ENCODE measurements at regions of chr10 and their contacts with region 1.

Region 1: DNA sequence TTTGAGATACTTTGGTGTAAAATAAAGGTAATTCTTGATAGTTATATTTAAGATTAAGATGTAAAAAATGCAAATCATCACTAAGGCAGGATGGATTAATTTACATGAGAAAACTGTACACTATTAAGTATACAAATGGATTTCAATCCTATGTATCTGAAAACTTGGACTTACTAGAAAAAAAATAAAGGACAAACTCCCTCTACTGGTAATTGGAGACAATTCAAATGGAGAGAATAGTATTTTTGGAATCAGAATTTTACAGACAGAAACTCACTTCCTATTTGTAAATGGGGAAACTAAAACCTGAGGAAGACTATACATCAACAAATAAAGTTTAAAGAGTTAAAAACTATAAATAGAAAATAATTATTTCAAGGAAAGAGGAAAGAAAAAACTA is 62.6 kb downstream of the CUL2 start:
- DNase-seq: no peak
- ATAC-seq: no peak
- H3K4me3 ChIP-seq: no peak overlapping the region
- H3K4me3 Mint-ChIP-seq: no peak overlapping the region
- H3K27ac ChIP-seq: no peak overlapping the region
- H3K27ac Mint-ChIP-seq: no peak overlapping the region
- H3K4me1 ChIP-seq: no peaks in the 10 kb centered on the region
- H3K4me1 Mint-ChIP-seq: no peaks in the 10 kb centered on the region
- H3K27me3 ChIP-seq: no peaks in the 10 kb centered on the region
- H3K27me3 Mint-ChIP-seq: no peaks in the 10 kb centered on the region
- CTCF ChIP-seq: peak; percentile 44

Region 2: GRCh38 chr10:34454590-34455261 is 572.8 kb before region 1 on chr10:
- CTCF ChIA-PET with region 1: no interaction called
- POLR2A ChIA-PET with region 1: no interaction called
- intact Hi-C with region 1: no loop called
- DNase-seq: no peak
- ATAC-seq: no peak
- H3K4me3 ChIP-seq: no peak overlapping the region
- H3K4me3 Mint-ChIP-seq: no peak overlapping the region
- H3K27ac ChIP-seq: no peak overlapping the region
- H3K27ac Mint-ChIP-seq: no peak overlapping the region
- H3K4me1 ChIP-seq: no peaks in the 10 kb centered on the region
- H3K4me1 Mint-ChIP-seq: no peaks in the 10 kb centered on the region
- H3K27me3 ChIP-seq: no peaks in the 10 kb centered on the region
- H3K27me3 Mint-ChIP-seq: no peaks in the 10 kb centered on the region
- CTCF ChIP-seq: no peak

Region 3: GRCh38 chr10:34565934-34566333 is 461.6 kb before region 1 on chr10:
- CTCF ChIA-PET with region 1: no interaction called
- POLR2A ChIA-PET with region 1: no interaction called
- intact Hi-C with region 1: no loop called
- DNase-seq: no peak
- ATAC-seq: no peak
- H3K4me3 ChIP-seq: no peak overlapping the region
- H3K4me3 Mint-ChIP-seq: no peak overlapping the region
- H3K27ac ChIP-seq: no peak overlapping the region
- H3K27ac Mint-ChIP-seq: no peak overlapping the region
- H3K4me1 ChIP-seq: no peaks in the 10 kb centered on the region
- H3K4me1 Mint-ChIP-seq: no peaks in the 10 kb centered on the region
- H3K27me3 ChIP-seq: no peaks in the 10 kb centered on the region
- H3K27me3 Mint-ChIP-seq: peaks cover 4% of the 10 kb centered on the region
- CTCF ChIP-seq: no peak

Region 4: DNA sequence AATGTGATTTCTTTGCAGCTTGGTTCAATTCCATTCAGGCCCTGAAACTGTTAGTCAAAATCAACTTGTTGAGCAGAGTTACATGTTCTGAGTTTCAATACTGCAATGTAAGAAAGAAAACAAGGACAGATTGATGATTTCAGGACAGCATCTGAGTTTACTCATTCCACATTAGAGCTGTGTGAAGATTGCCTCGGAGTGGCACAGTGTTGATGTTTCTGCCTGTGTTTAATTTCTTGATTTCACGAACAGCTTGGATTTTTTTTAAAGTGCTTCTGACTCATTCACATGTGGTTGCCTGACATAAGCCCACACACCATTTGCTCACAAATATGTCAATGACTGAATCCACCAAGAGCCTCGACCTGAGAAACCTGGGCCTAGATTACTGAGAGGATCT is 111.3 kb before region 1 on chr10:
- CTCF ChIA-PET with region 1: no interaction called
- POLR2A ChIA-PET with region 1: no interaction called
- intact Hi-C with region 1: no loop called
- DNase-seq: no peak
- ATAC-seq: no peak
- H3K4me3 ChIP-seq: no peak overlapping the region
- H3K4me3 Mint-ChIP-seq: no peak overlapping the region
- H3K27ac ChIP-seq: no peak overlapping the region
- H3K27ac Mint-ChIP-seq: no peak overlapping the region
- H3K4me1 ChIP-seq: no peaks in the 10 kb centered on the region
- H3K4me1 Mint-ChIP-seq: no peaks in the 10 kb centered on the region
- H3K27me3 ChIP-seq: no peaks in the 10 kb centered on the region
- H3K27me3 Mint-ChIP-seq: no peaks in the 10 kb centered on the region
- CTCF ChIP-seq: no peak

Region 5: GRCh38 chr10:34994565-34995142 is 32.9 kb before region 1 on chr10:
- CTCF ChIA-PET with region 1: interaction called, 12 read pairs
- POLR2A ChIA-PET with region 1: no interaction called
- intact Hi-C with region 1: loop called (anchors 1 to 2 kb)
- DNase-seq: peak; percentile 11 to 66 (median 36)
- ATAC-seq: peak; percentile 76
- H3K4me3 ChIP-seq: no peak overlapping the region
- H3K4me3 Mint-ChIP-seq: no peak overlapping the region
- H3K27ac ChIP-seq: no peak overlapping the region
- H3K27ac Mint-ChIP-seq: peak overlapping the region; percentile 31
- H3K4me1 ChIP-seq: peaks cover 8% of the 10 kb centered on the region
- H3K4me1 Mint-ChIP-seq: peaks cover 10% of the 10 kb centered on the region
- H3K27me3 ChIP-seq: no peaks in the 10 kb centered on the region
- H3K27me3 Mint-ChIP-seq: no peaks in the 10 kb centered on the region
- CTCF ChIP-seq: peak; percentile 69

Region 6: GRCh38 chr10:35356725-35357092 is 329.1 kb after region 1 on chr10:
- CTCF ChIA-PET with region 1: no interaction called
- POLR2A ChIA-PET with region 1: no interaction called
- intact Hi-C with region 1: no loop called
- DNase-seq: peak in 1 of 14 experiments; percentile 22
- ATAC-seq: peak; percentile 58
- H3K4me3 ChIP-seq: no peak overlapping the region
- H3K4me3 Mint-ChIP-seq: peak overlapping the region; percentile 18
- H3K27ac ChIP-seq: no peak overlapping the region
- H3K27ac Mint-ChIP-seq: no peak overlapping the region
- H3K4me1 ChIP-seq: peaks cover 50% of the 10 kb centered on the region
- H3K4me1 Mint-ChIP-seq: peaks cover 81% of the 10 kb centered on the region
- H3K27me3 ChIP-seq: no peaks in the 10 kb centered on the region
- H3K27me3 Mint-ChIP-seq: no peaks in the 10 kb centered on the region
- CTCF ChIP-seq: no peak